ENCODE measurements at regions of chr12 and their contacts with region 1.

Region 1: DNA sequence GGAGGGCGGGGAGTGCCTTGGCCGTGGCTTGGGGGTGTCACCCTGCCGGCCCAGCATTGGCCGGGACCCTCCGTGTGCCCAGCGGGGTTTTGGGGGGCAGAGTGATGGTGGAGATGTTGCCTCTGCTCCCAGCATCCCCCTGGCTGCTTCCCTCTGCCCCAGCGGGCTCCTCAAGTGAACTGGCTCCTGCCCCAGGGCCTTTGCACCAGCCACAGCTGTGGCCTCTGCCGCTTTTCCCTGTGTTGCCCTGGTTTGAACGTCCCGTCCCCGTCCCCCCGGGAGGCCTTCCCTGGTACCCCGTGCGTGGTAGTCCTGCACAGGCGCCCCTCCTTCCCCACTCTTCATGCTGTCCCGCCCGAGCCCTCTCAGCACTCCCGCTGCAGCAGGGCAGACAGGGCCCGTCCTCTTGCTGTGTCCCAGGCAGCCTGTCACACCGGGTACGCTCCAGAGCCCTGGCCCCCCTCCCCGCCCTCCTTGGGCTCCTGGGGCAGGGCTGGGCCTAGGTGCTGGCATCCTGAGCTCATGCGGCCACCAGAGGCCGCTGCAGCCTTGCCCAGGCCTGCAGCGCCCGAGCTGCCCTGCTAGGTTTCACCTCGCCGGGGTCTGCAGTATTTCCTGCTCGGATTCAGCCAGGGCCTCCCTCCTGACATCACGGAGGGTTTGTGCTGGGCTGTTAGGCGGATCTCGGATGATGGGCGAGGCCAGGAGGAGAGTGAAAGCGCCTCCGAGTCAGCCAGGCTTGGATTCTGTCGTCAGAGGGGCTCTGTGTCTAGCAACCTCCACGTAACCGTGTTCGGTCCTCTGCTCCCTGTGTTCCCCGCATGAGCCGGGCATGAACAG is 9.5 kb downstream of the NOC4L start:
- DNase-seq: peak; percentile 91
- H3K4me3 ChIP-seq: peak overlapping the region in 6 of 8 donors; percentile 6 to 48 (median 13)
- H3K27ac ChIP-seq: no peak overlapping the region
- H3K4me1 ChIP-seq: peaks cover 7 to 17% (median 12%) of the 10 kb centered on the region in 6 donors
- H3K27me3 ChIP-seq: no peaks in the 10 kb centered on the region
- CTCF ChIP-seq: peak; percentile 79 to 97 (median 94)
- POLR2A ChIP-seq: no peak

Region 2: DNA sequence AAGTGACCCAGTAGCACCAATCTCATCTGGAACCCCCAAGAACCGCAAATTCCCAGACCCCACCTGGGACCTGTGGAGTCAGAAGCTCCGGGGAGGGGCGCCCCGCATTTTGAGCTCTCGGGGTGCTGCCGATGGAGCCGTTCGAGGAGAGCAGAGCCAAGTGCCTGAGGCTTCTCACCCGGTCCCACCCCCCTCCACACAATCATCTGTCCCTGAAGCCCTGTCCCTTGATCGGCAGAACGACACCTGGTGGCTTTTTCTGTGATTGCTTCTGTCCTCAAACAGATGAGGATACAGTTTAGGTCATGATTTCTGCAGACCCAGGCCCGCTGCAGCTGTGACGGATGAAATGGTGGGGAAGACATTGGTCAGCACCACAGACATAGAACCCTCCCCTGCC is 65.2 kb after region 1 on chr12:
- intact Hi-C with region 1: no loop called
- DNase-seq: no peak
- H3K4me3 ChIP-seq: no peak overlapping the region
- H3K27ac ChIP-seq: no peak overlapping the region
- H3K4me1 ChIP-seq: peaks cover 0 to 18% (median 4%) of the 10 kb centered on the region in 6 donors
- H3K27me3 ChIP-seq: peaks cover 0 to 52% (median 10%) of the 10 kb centered on the region in 7 donors
- CTCF ChIP-seq: peak in 6 of 11 experiments; percentile 24 to 48 (median 34)
- POLR2A ChIP-seq: no peak

Region 3: GRCh38 chr12:132470978-132471857 is 317.5 kb after region 1 on chr12:
- intact Hi-C with region 1: no loop called
- DNase-seq: peak; percentile 79
- H3K4me3 ChIP-seq: peak overlapping the region in 1 of 8 donors; percentile 59
- H3K27ac ChIP-seq: peak overlapping the region in 5 of 8 donors; percentile 18 to 68 (median 50)
- H3K4me1 ChIP-seq: peaks cover 3 to 67% (median 33%) of the 10 kb centered on the region in 6 donors
- H3K27me3 ChIP-seq: peaks cover 0 to 25% (median 0%) of the 10 kb centered on the region in 7 donors
- CTCF ChIP-seq: no peak
- POLR2A ChIP-seq: no peak

Region 4: GRCh38 chr12:132614861-132615578 is 461.3 kb after region 1 on chr12:
- intact Hi-C with region 1: loop called (anchors 10 kb)
- DNase-seq: peak; percentile 92
- H3K4me3 ChIP-seq: no peak overlapping the region
- H3K27ac ChIP-seq: no peak overlapping the region
- H3K4me1 ChIP-seq: peaks cover 1 to 37% (median 17%) of the 10 kb centered on the region in 6 donors
- H3K27me3 ChIP-seq: peaks cover 0 to 71% (median 46%) of the 10 kb centered on the region in 7 donors
- CTCF ChIP-seq: peak; percentile 41 to 91 (median 83)
- POLR2A ChIP-seq: no peak

Measured in spleen (tissue), 13 donors.